Sciatic nerve (tissue), 2 donors: ENCODE measurements at regions of chr2 and their contacts with region 1.

Region 1: GRCh38 chr2:232854082-232854481 is 16.0 kb upstream of the SNORC start:
- DNase-seq: no peak
- ATAC-seq: no peak

Region 2: GRCh38 chr2:233053928-233054784 is 200.1 kb after region 1 on chr2:
- intact Hi-C with region 1: loop called (anchors 10 kb)
- DNase-seq: peak; percentile 76
- ATAC-seq: peak; percentile 51

Region 3: GRCh38 chr2:233251306-233252116 is 397.4 kb after region 1 on chr2 and contains the start of gene ATG16L1:
- intact Hi-C with region 1: loop called (anchors 5 kb)
- DNase-seq: peak; percentile 97
- ATAC-seq: peak; percentile 100
- total RNA-seq, gene ATG16L1: 26.4 TPM